ENCODE measurements at regions of chr1 and their contacts with region 1.

Region 1: GRCh38 chr1:178542560-178543356 is 29.8 kb downstream of the TEX35 start:
- DNase-seq: peak; percentile 92
- CTCF ChIP-seq: peak; percentile 97

Region 2: DNA sequence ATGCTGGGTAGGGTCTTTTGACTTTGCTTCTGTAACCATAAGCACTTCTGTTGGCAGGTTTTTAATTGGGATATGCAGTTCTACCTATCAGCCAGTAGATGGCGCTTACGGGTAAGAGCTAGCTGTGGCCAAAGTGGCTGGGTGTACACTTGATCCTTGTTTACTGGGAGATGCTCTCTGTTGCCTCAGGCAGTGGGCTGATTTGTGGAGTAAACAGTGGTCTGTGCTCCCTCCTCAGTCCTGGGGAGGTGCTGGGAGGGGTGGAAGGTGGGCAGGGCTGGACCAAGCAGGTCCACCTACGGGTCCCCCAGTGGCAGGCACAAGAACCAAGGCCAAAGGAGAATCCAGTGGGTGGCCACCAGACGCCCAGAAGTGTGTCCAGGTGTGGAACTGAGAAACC is 225.7 kb after region 1 on chr1:
- in situ Hi-C with region 1: loop called (anchors 10 kb)
- DNase-seq: peak; percentile 46
- CTCF ChIP-seq: peak; percentile 83

Region 3: GRCh38 chr1:178908358-178908757 is 365.6 kb after region 1 on chr1:
- in situ Hi-C with region 1: no loop called
- DNase-seq: no peak
- CTCF ChIP-seq: no peak